ENCODE measurements at regions of chr11 and their contacts with region 1.

Region 1: DNA sequence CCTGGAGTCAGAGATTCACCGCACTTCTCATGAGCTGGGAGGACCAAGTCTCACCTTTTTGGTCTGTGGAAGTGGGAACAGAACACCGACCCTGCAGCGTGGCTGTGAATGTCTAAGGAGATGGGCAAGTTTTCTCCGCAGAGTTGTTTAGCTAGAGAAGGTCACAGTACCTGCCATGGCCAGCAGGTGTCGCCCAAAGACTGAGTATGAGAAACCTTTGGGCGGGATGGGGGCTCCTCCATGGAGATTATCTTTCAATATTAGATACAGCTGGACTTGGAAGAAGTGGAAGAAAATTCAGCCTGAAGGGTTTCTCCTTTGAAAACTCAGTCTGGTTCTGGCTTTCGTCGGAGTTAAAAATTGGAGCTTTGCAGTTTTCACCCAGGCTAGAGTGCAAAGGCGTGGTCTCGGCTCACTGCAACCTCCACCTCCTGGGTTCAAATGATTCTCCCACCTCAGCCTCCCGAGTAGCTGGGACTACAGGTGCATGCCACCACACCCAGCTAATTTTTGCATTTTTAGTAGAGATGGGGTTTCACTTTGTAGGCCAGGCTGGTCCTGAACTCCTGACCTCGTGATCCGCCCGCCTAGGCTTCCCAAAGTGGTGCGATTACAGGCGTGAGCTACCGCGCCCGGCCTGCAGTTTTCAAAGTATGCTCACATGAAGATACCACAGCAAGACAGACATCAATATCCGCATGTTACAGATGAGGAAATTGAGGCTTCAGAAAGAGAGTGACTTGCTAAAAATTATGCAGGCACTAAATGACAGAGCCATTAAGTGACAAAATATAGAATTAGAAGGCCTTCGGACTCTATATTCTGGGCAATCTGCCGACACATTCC is 10.7 kb upstream of the DSCAML1 start:
- DNase-seq: peak; percentile 60 to 86 (median 82)
- H3K4me3 ChIP-seq: no peak overlapping the region
- H3K27ac ChIP-seq: no peak overlapping the region
- H3K4me1 ChIP-seq: peaks cover 4% of the 10 kb centered on the region
- H3K27me3 ChIP-seq: no peaks in the 10 kb centered on the region
- CTCF ChIP-seq: peak; percentile 72 to 87 (median 86)
- EP300 ChIP-seq: no peak
- POLR2A ChIP-seq: no peak

Region 2: GRCh38 chr11:117857734-117858414 is 50.2 kb after region 1 on chr11:
- intact Hi-C with region 1: loop called in 1 of 4 experiments (anchors 2 kb)
- DNase-seq: peak in 4 of 5 donors; percentile 43 to 81 (median 56)
- H3K4me3 ChIP-seq: no peak overlapping the region
- H3K27ac ChIP-seq: peak overlapping the region; percentile 45 to 73
- H3K4me1 ChIP-seq: peaks cover 41% of the 10 kb centered on the region
- H3K27me3 ChIP-seq: no peaks in the 10 kb centered on the region
- CTCF ChIP-seq: no peak
- EP300 ChIP-seq: no peak
- POLR2A ChIP-seq: no peak